Vagina (tissue), 2 donors: ENCODE measurements at regions of chr1 and their contacts with region 1.

Region 1: DNA sequence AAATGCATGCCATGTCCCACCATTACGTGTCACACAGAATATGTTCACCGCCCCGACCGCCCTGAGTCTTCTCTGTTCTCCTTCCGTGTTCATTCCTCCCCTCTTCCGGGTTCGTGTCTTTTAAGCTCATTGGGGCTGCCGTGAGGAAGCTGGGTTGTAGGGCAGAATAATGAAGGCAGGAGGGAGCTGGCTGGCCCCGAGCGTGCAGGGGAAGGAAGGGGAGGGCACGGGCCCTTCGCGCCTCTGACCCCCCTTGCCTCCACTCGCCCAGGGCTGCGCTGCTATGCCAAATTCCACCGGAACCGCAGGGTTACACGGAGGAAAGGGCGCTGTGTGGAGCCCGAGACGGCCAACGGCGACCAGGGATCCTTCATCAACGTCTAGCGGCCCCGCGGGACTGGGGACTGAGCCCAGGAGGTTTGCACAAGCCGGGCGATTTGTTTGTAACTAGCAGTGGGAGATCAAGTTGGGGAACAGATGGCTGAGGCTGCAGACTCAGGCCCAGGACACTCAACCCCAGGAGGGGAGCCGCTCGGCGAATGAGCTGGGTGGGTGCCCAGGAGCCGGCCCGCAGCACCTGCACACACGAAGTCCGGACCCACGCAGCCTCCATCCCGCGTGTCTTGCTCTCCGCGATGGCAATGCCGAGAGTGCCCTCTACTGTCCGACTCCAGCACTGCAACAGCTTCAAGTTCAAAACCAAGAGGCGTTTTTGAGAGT is 16.5 kb upstream of the AGTRAP start:
- DNase-seq: no peak
- H3K4me3 ChIP-seq: peak overlapping the region; percentile 34 to 45
- H3K27ac ChIP-seq: peak overlapping the region; percentile 7
- H3K4me1 ChIP-seq: peaks cover 12% of the 10 kb centered on the region
- H3K27me3 ChIP-seq: no peaks in the 10 kb centered on the region
- CTCF ChIP-seq: peak; percentile 85 to 93 (median 92)
- POLR2A ChIP-seq: no peak

Region 2: DNA sequence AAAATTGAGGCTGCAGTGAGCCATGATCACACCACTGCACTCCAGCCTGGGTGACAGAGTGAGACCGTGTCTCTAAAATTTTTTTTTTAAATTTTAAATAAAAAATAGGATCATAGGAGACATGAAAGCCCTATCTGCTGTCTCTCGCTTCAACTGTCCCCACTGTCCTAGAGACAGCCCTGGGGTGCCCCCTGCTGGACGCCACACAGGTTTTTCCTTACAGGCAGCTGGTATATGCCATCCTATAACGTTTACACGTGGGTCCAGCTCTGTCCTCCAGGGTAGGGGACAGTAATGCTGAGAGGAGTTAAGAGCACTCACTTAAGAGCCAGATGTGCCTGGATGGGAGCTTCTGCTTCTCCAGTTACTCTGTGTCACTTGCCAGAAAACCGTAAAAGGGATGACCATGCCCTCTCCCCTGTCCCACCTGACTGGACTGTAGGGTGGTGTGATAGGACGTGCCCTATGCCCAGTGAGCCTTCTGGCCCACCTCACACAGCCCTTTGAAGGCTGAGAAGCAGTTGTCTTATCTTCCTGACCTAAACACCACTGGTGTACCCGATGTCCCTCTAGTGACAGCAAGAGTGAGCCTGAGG is 73.7 kb before region 1 on chr1:
- intact Hi-C with region 1: loop called (anchors 5 kb)
- DNase-seq: no peak
- H3K4me3 ChIP-seq: no peak overlapping the region
- H3K27ac ChIP-seq: no peak overlapping the region
- H3K4me1 ChIP-seq: peaks cover 24% of the 10 kb centered on the region
- H3K27me3 ChIP-seq: peaks cover 9% of the 10 kb centered on the region
- CTCF ChIP-seq: peak; percentile 3 to 59 (median 52)
- POLR2A ChIP-seq: no peak

Region 3: GRCh38 chr1:11693024-11693590 is 26.4 kb before region 1 on chr1:
- intact Hi-C with region 1: loop called (anchors 2 kb)
- DNase-seq: no peak
- H3K4me3 ChIP-seq: no peak overlapping the region
- H3K27ac ChIP-seq: no peak overlapping the region
- H3K4me1 ChIP-seq: peaks cover 26% of the 10 kb centered on the region
- H3K27me3 ChIP-seq: peaks cover 4% of the 10 kb centered on the region
- CTCF ChIP-seq: no peak
- POLR2A ChIP-seq: no peak

Region 4: DNA sequence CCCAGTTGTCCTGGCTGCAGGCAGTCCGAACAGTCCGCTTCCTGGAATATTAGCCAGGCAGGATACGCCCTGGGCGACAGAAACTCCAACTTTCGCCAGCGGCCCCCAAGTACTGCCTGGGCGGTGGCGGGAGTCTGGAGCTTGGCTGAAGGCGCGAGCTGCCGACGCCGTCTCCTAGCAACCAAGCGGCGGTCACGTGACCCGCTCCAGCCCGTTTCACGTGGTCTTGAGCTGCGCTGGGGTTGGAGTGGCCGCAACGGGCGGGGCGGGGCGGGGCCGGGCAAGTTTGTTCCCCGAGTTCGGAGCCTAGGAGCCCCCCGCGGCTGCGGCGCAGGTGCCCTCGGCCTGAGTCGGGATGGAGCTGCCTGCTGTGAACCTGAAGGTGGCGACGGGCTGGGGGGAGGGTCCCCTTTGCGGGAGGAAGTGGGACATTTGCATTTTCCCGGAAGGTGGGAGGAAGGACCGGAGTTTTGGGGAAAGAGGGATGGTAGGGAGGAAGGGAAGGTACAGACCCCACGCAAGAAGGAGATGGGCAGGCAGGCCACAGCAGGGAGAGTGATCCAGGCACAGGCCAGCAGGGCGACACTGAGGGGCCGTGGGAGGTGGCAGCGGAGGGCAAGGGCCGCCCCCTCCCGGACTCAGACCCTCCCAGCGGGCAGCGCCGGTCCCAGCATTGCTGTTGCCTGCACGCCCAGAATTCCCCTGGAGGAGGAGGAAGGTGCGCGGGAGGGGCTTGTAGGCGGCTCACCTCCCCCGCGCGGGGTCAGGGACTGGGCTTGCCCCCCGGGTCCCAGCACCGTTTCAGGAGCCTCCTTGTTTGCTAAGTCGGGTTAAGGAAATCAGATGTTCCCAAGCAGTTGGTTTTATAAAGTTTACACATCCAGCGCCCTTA is 16.6 kb after region 1 on chr1 and contains the start of gene AGTRAP:
- intact Hi-C with region 1: no loop called
- DNase-seq: peak in 1 of 2 donors; percentile 98
- H3K4me3 ChIP-seq: peak within 1 kb of the TSS; percentile 72 to 98
- H3K27ac ChIP-seq: peak within 1 kb of the TSS; percentile 88
- H3K4me1 ChIP-seq: peaks cover 58% of the 10 kb centered on the region
- H3K27me3 ChIP-seq: no peaks in the 10 kb centered on the region
- CTCF ChIP-seq: peak in 1 of 3 experiments; percentile 11
- POLR2A ChIP-seq: peak in 1 of 2 donors; percentile 51
- total RNA-seq, gene AGTRAP: 49.4 TPM